Mucosa of descending colon (tissue), 3 donors: ENCODE measurements at regions of chr12 and their contacts with region 1.

Region 1: DNA sequence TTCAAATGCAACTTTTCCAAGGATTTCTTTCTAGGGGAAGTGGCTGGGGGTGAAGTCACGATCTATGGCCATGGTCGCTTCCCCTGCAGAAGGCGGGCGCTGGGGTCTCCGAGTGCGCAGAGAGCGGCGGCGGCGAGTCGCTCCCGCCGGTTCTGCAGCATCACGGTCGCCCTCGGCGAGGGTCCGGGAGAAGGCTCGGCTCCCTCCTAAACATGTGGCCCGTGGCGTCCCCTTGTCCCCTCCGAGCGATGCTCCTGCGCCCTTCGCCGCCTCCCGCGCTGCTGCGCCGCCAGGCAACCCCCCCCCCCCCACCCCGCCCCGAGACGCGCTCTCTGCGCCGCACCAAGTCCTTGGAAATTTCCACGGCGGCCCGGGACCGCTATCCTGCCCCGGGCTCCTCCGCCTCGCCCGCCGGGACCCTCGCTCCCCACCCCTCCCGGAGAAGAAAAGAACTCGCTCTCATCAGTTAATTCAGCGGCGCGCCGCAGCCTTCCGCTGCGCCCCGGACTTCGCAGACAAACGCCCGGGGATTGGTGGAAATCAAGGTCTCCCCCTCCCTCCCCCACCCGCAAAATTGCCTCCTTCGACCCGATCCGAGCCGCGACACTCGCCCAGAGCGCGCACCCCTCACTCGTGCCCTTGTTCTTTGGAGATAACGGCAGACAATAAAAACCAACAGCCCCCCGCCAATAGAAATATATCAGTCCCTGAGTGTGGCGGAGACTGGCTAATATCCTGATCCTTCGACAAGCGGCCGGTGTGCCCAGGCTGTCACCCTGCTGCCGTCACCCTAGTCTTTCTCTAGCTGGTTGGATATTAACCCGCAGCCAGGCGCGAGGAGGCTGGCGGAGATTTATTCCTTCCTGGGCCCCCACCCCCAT is at the start of gene ST8SIA1:
- DNase-seq: peak; percentile 46 to 75 (median 59)
- ATAC-seq: peak; percentile 59
- H3K4me3 ChIP-seq: peak within 1 kb of the TSS; percentile 26
- H3K4me1 ChIP-seq: peaks cover 8% of the 10 kb centered on the region
- CTCF ChIP-seq: no peak
- total RNA-seq, gene ST8SIA1: 3.2 to 23.8 (median 3.2) TPM

Region 2: GRCh38 chr12:22083167-22083566 is 251.5 kb before region 1 on chr12:
- intact Hi-C with region 1: loop called in 1 of 2 experiments (anchors 10 kb)
- DNase-seq: peak in 1 of 3 donors; percentile 41
- ATAC-seq: no peak
- H3K4me3 ChIP-seq: no peak overlapping the region
- H3K4me1 ChIP-seq: no peaks in the 10 kb centered on the region
- CTCF ChIP-seq: no peak

Region 3: DNA sequence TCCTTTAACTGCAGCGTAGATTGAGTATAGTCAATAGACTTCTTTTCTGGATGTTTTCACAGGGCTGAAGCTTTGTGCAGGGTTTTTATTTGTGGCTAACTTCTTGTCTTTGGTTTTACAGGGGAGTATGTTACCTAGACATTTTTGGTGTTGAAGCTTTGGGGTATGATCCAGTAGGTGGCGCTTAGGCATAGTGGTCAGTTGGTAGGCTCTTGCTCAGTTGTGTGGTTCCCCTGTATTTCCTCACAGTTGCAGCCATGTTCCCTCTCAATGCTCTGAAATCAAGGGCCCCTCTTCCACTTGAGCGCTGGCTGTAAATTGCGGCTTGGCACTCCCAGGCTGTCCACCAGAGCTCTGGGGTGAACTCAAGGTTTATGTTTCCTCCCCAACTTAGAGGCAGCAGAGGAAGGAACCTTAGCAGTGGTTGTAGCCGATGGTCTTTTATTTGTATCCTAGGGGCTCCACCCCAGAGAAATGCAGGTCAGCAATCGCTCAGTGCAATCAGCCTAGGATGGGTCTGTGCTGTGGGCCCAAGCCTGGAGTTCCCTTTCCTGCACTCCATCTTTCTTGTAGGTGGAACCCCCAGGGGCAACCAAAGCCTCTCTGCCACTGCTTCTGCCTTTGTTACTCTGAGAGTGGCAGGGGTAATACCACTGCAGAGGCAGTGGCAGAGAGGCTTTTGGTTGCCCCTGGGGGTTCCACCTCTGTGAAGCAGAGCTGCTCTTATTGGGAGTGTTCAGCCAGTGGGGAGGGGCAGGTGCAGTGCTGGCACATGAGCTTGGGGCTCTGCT is 233.5 kb before region 1 on chr12:
- intact Hi-C with region 1: loop called in 1 of 2 experiments (anchors 5 kb)
- DNase-seq: peak in 1 of 3 donors; percentile 77
- ATAC-seq: peak; percentile 70
- H3K4me3 ChIP-seq: no peak overlapping the region
- H3K4me1 ChIP-seq: no peaks in the 10 kb centered on the region
- CTCF ChIP-seq: no peak

Region 4: GRCh38 chr12:22238211-22238610 is 96.4 kb before region 1 on chr12:
- intact Hi-C with region 1: no loop called
- DNase-seq: no peak
- ATAC-seq: no peak
- H3K4me3 ChIP-seq: no peak overlapping the region
- H3K4me1 ChIP-seq: no peaks in the 10 kb centered on the region
- CTCF ChIP-seq: no peak